ENCODE measurements at regions of chr10 and their contacts with region 1.

Region 1: DNA sequence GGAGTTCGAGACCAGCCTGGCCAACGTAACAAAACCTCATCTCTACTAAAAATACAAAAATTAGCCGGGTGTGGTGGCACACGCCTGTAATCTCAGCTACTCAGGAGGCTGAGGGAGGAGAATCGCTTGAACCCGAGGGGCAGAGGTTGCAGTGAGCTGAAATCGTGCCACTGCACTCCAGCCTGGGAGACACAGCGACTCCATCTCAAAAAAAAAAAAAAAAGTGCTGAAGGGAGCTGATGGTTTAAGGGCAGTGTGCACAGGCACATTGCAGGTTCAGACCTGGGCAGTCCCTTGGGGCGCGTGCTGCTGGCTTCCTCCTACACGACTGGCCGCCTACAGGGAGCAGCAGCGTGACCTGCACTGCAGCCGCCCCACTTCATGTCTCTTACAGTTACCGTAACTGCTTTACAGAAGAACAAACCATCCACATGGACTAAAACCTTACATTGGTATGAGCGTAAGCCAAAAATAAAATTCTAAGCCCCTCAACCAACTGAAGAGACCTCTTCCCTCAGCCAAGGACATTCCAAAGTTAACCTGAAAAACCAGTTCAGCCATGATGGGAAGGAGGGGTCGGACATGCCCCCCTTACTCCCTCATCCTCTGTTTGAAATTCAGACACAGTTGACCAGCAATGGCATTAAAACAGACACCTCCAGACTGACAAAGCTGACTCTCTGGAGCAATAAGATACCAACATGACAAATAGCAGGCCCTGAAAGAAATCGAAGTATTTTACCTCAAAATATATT is 262.2 kb downstream of the ZMYND11 start:
- DNase-seq: no peak
- ATAC-seq: no peak

Region 2: DNA sequence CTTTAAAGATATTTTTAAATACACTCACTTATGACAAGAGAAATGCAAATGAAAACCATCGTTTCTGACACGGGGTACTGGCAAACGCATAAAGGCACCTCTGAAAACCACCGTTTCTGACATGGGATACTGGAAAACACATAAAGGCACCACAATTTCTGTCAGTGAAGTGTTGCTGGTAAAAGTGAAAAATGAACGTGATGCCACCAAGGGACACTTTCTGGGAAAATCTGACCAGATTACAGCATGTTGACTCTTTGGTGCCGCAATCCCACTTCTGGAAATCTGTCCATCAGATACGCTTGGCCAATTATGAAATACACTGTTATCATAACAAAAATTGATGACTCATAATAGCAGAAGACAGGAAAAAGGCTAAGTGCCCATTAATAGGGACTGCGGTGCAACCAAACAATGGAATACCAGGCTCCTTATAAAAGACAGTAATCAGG is 130.5 kb before region 1 on chr10:
- intact Hi-C with region 1: no loop called
- DNase-seq: no peak
- ATAC-seq: no peak

Region 3: DNA sequence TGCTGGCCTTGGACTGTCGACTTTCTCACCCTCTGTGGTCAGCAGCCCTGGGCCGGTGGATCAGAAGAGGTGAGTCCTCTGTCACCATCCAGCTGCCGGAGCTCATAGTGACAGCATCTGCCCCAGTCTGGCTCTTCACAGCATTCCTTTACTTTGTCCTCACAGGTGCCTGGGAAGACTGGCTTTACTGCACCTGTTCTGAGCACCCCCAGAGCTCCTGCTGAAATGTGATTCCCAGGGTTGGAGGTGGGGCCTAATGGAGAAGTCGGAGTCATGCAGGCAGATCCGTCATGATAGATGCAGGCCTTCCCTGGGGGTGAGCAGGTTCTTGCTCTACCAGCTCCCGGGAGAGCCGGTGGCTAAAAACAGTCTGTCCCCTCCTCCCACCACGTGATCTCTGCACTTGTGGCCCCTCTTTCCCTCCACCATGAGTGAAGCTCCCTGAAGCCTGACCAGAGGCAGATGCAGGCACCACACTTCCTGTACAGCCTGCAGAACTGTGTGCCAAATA is 90.8 kb before region 1 on chr10:
- intact Hi-C with region 1: no loop called
- DNase-seq: no peak
- ATAC-seq: no peak

Region 4: DNA sequence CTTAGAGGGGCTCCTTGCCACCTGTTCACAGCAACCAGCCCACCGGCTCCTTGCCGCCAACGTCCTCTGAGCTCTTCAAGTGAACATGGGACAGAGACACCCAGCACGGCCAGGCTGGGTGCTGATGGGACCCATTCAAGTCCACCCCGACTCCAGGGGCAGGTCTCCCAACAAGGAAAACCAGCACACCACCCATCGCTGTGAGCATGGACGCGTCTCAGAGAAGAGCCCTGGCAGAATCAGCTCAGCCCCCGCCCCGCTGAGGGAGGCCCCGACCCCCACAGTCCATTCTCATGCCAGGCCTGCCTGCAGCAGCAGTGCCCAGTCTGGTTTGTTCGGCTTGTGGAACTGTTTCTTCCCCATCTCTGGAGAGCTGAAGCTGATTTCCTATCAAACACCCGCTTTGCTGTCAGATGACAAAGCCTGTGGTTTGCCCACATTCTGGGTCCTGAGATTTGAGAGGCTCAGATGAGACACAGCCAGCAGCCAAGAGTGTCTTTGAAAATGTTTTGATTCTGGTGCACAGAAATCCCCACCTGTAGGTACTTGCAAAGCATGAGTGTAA is 45.6 kb before region 1 on chr10:
- intact Hi-C with region 1: no loop called
- DNase-seq: peak; percentile 65
- ATAC-seq: no peak

Region 5: DNA sequence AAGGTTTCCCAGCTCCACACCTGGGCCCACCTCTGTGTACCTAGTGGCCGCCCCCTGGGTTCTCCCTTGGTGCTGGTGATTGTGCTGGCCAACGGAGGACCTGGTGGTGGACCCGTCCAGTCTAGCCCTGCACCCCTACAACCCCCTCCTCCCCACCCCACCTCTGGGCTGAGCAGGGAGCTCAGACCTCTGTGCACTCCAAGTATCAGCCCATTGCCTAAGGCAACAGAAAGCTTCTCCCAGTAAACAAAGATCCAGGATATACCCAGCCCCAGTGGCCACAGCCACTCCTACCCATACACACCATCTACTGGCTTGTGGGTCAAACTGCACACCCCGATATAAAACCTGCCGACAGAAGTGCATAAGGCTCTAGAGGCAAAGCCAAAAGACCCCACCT is 397.0 kb after region 1 on chr10:
- intact Hi-C with region 1: loop called (anchors 10 kb)
- DNase-seq: no peak
- ATAC-seq: peak; percentile 58

Measured in Right ventricle myocardium inferior (tissue), 1 donor.